ENCODE measurements at regions of chr16 and their contacts with region 1.

Region 1: GRCh38 chr16:7602291-7602950 is 269.8 kb downstream of the RBFOX1 start:
- DNase-seq: no peak
- ATAC-seq: no peak
- H3K4me3 ChIP-seq: no peak overlapping the region
- H3K27ac ChIP-seq: no peak overlapping the region
- H3K4me1 ChIP-seq: peaks cover 33 to 43% of the 10 kb centered on the region in 2 donors
- H3K27me3 ChIP-seq: no peaks in the 10 kb centered on the region
- CTCF ChIP-seq: no peak
- POLR2A ChIP-seq: no peak

Region 2: GRCh38 chr16:7321661-7322060 is 280.8 kb before region 1 on chr16:
- in situ Hi-C with region 1: no loop called
- intact Hi-C with region 1: loop called (anchors 10 kb)
- DNase-seq: no peak
- ATAC-seq: no peak
- H3K4me3 ChIP-seq: no peak overlapping the region
- H3K27ac ChIP-seq: no peak overlapping the region
- H3K4me1 ChIP-seq: peaks cover 21 to 27% of the 10 kb centered on the region in 2 donors
- H3K27me3 ChIP-seq: no peaks in the 10 kb centered on the region
- CTCF ChIP-seq: no peak
- POLR2A ChIP-seq: no peak

Region 3: GRCh38 chr16:7509963-7510601 is 92.3 kb before region 1 on chr16:
- in situ Hi-C with region 1: no loop called
- intact Hi-C with region 1: loop called (anchors 5 kb)
- DNase-seq: no peak
- ATAC-seq: no peak
- H3K4me3 ChIP-seq: no peak overlapping the region
- H3K27ac ChIP-seq: no peak overlapping the region
- H3K4me1 ChIP-seq: peaks cover 36 to 38% of the 10 kb centered on the region in 2 donors
- H3K27me3 ChIP-seq: no peaks in the 10 kb centered on the region
- CTCF ChIP-seq: no peak
- POLR2A ChIP-seq: no peak

Region 4: DNA sequence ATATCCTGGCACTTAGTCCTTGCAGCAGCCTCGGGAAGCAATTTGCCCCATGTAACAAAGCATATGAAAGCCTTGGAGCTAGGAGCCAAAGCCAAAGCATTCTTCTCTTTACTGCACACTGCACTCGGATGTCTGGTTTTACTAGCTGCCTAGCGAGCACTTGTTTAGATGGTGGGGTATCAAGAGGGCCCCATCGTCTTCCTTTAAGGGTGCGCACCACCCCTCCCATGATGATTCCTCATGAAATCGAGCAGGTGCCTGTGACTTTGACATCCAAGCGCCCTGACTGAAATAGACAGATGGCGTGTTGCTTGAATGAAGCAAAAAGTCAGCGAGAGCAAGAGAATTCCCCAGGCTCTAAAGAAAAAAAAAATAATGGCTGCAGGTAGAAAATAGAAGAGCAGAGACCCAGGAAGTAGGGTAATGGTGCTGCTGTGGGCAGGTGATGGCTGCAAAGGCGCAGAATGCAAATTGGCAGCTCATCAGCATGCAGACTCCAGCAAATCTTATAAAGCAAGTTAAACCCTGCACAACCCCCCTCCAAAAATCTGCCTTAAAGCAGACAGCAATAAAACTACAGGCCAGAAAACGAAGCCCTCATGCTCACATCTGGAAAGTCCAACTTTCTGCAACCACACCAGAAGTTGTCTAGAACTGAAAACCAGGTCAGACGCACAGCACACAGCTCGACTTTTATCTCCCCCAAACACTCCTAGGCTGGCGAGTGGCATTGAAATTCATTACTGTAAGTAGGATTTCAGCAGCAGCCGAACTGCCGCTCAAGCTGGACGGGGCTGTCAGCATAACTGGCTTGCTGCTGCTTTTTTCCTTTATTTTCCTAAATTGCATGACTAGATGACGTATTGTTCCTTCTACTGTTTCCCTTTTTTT is 114.5 kb after region 1 on chr16:
- in situ Hi-C with region 1: no loop called
- intact Hi-C with region 1: no loop called
- DNase-seq: no peak
- ATAC-seq: no peak
- H3K4me3 ChIP-seq: no peak overlapping the region
- H3K27ac ChIP-seq: no peak overlapping the region
- H3K4me1 ChIP-seq: no peaks in the 10 kb centered on the region
- H3K27me3 ChIP-seq: no peaks in the 10 kb centered on the region
- CTCF ChIP-seq: no peak
- POLR2A ChIP-seq: no peak

Measured in gastrocnemius medialis (tissue), 4 donors.